Naive thymus-derived CD4-positive, alpha-beta T cell (primary cell): ENCODE measurements at regions of chr12 and their contacts with region 1.

Region 1: GRCh38 chr12:89709157-89709994 is 738 bp upstream of the ATP2B1 start:
- DNase-seq: peak; percentile 94 to 99 (median 97)
- ATAC-seq: peak; percentile 85
- H3K4me3 ChIP-seq: peak overlapping the region; percentile 90
- H3K4me3 Mint-ChIP-seq: peak overlapping the region; percentile 89 to 99 (median 93)
- H3K27ac ChIP-seq: peak overlapping the region; percentile 92
- H3K27ac Mint-ChIP-seq: peak overlapping the region; percentile 85 to 100 (median 95)
- H3K4me1 ChIP-seq: peaks cover 11 to 21% of the 10 kb centered on the region in 2 donors
- H3K4me1 Mint-ChIP-seq: peaks cover 17 to 42% (median 37%) of the 10 kb centered on the region in 7 donors
- H3K27me3 ChIP-seq: no peaks in the 10 kb centered on the region
- H3K27me3 Mint-ChIP-seq: peaks cover 0 to 54% (median 0%) of the 10 kb centered on the region in 5 donors

Region 2: DNA sequence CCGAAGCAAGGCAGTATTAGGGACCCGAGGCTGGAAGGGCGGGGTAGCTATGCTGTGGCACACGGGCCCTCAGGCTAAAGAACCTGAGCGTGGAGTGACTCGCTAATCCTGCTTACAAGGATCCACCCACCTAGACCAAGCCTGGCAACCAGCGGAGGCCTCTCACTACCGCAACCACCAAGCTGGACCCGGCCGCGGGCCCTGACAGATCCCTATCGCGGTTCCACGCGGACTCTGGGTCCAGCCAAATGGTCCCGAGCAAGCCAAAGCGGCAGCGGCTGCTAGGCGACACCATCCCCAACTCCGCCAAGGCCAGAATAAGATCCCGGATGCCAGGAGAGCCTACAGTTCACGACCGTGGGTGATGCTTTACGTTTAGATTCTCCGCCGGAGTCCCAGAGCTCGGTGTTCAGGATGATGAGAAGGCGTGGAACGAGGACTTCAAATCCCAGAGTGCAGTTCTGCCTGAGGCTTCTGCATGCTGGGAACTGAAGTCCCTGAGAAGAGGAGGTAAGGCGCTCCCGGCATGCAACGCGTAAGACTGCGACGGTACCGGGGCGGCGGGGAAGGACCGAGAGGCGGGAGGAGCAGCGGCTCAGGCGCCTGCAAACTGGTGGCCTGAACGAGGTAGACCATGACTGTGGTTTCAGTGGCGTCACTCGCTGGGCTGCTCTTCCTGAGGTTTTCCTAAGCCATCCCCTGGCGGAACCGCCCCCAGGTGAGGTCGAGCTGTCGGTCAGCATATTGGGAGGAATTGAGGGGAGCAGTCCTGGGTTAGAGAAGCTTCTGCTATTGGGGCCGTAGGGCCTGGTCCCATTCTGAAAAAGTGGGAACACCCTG is 1567.4 kb before region 1 on chr12 and contains the starts of genes CEP290 and TMTC3:
- CTCF ChIA-PET with region 1: no interaction called
- POLR2A ChIA-PET with region 1: interaction called, 4 read pairs
- intact Hi-C with region 1: loop called (anchors 1 kb)
- DNase-seq: peak; percentile 69 to 98 (median 94)
- ATAC-seq: peak; percentile 97
- H3K4me3 ChIP-seq: peak within 1 kb of the TSS; percentile 82
- H3K4me3 Mint-ChIP-seq: peak within 1 kb of the TSS; percentile 88 to 100 (median 96)
- H3K27ac ChIP-seq: peak within 1 kb of the TSS; percentile 84
- H3K27ac Mint-ChIP-seq: peak within 1 kb of the TSS; percentile 66 to 99 (median 94)
- H3K4me1 ChIP-seq: peaks cover 12 to 14% of the 10 kb centered on the region in 2 donors
- H3K4me1 Mint-ChIP-seq: peaks cover 26 to 68% (median 45%) of the 10 kb centered on the region in 7 donors
- H3K27me3 ChIP-seq: no peaks in the 10 kb centered on the region
- H3K27me3 Mint-ChIP-seq: no peaks in the 10 kb centered on the region
- total RNA-seq, gene CEP290: 14.7 to 29.5 (median 19.5) TPM
- total RNA-seq, gene TMTC3: 6.4 to 11.1 (median 7.5) TPM

Region 3: DNA sequence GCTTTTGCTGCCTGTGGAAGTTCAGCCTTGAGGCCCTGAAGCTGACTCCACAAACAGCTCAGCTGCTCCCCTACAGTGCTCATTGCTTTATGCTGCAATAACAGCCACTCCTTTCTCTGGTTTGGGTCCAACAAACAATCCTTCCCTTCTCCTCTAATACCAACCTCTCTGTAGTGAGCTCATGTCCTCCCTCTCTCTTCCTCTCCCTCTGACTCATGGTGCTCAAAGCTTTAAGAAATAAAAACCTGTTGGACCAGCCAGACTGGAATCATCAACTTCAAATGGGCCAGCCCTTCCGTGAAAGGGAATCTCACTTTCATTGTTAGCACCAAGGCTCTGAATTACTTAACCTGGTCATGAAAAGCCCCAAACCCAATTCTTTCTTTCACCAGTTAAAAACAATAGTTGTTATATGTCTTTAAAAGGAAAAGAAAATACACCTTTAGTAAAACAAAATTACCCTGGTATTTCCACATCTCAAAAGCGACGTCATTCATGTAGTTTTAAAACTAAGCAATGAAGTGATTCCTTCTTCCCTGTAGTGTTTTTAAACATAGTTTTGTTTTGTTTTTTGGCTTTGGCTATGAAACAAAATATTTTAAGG is 483.5 kb before region 1 on chr12:
- CTCF ChIA-PET with region 1: no interaction called
- POLR2A ChIA-PET with region 1: no interaction called
- intact Hi-C with region 1: loop called in 1 of 2 experiments (anchors 5 kb)
- DNase-seq: peak in 1 of 9 donors; percentile 47
- ATAC-seq: peak; percentile 26
- H3K4me3 ChIP-seq: no peak overlapping the region
- H3K4me3 Mint-ChIP-seq: peak overlapping the region in 8 of 10 donors; percentile 26 to 74 (median 54)
- H3K27ac ChIP-seq: no peak overlapping the region
- H3K27ac Mint-ChIP-seq: peak overlapping the region; percentile 38 to 94 (median 63)
- H3K4me1 ChIP-seq: peaks cover 16 to 17% of the 10 kb centered on the region in 2 donors
- H3K4me1 Mint-ChIP-seq: peaks cover 18 to 76% (median 48%) of the 10 kb centered on the region in 7 donors
- H3K27me3 ChIP-seq: no peaks in the 10 kb centered on the region
- H3K27me3 Mint-ChIP-seq: no peaks in the 10 kb centered on the region

Region 4: GRCh38 chr12:89524541-89525285 is 184.7 kb before region 1 on chr12 and contains the start of gene GALNT4:
- CTCF ChIA-PET with region 1: no interaction called
- POLR2A ChIA-PET with region 1: interaction called, 9 read pairs
- intact Hi-C with region 1: loop called (anchors 1 kb)
- DNase-seq: peak; percentile 61 to 78 (median 74)
- ATAC-seq: peak; percentile 87
- H3K4me3 ChIP-seq: peak within 1 kb of the TSS; percentile 90
- H3K4me3 Mint-ChIP-seq: peak within 1 kb of the TSS; percentile 87 to 98 (median 96)
- H3K27ac ChIP-seq: peak within 1 kb of the TSS; percentile 77
- H3K27ac Mint-ChIP-seq: peak within 1 kb of the TSS; percentile 67 to 96 (median 89)
- H3K4me1 ChIP-seq: peaks cover 30 to 35% of the 10 kb centered on the region in 2 donors
- H3K4me1 Mint-ChIP-seq: peaks cover 30 to 66% (median 55%) of the 10 kb centered on the region in 7 donors
- H3K27me3 ChIP-seq: no peaks in the 10 kb centered on the region
- H3K27me3 Mint-ChIP-seq: no peaks in the 10 kb centered on the region
- total RNA-seq, gene GALNT4: 6.0 to 14.5 (median 9.9) TPM

Region 5: GRCh38 chr12:89663577-89664357 is 45.6 kb before region 1 on chr12:
- CTCF ChIA-PET with region 1: no interaction called
- POLR2A ChIA-PET with region 1: interaction called, 3 read pairs
- intact Hi-C with region 1: loop called in 1 of 2 experiments (anchors 2 kb)
- DNase-seq: peak in 3 of 9 donors; percentile 2 to 15 (median 10)
- ATAC-seq: peak; percentile 62
- H3K4me3 ChIP-seq: no peak overlapping the region
- H3K4me3 Mint-ChIP-seq: peak overlapping the region in 9 of 10 donors; percentile 3 to 48 (median 11)
- H3K27ac ChIP-seq: no peak overlapping the region
- H3K27ac Mint-ChIP-seq: peak overlapping the region in 6 of 9 donors; percentile 21 to 28 (median 27)
- H3K4me1 ChIP-seq: peaks cover 30 to 36% of the 10 kb centered on the region in 2 donors
- H3K4me1 Mint-ChIP-seq: peaks cover 16 to 78% (median 74%) of the 10 kb centered on the region in 7 donors
- H3K27me3 ChIP-seq: no peaks in the 10 kb centered on the region
- H3K27me3 Mint-ChIP-seq: no peaks in the 10 kb centered on the region

Region 6: GRCh38 chr12:89862511-89863179 is 153.3 kb after region 1 on chr12:
- CTCF ChIA-PET with region 1: no interaction called
- POLR2A ChIA-PET with region 1: interaction called, 26 read pairs
- intact Hi-C with region 1: loop called (anchors 1 kb)
- DNase-seq: peak in 7 of 9 donors; percentile 46 to 66 (median 57)
- ATAC-seq: peak; percentile 49
- H3K4me3 ChIP-seq: peak overlapping the region; percentile 44
- H3K4me3 Mint-ChIP-seq: peak overlapping the region; percentile 78 to 86 (median 82)
- H3K27ac ChIP-seq: peak overlapping the region; percentile 87
- H3K27ac Mint-ChIP-seq: peak overlapping the region; percentile 96 to 99 (median 98)
- H3K4me1 ChIP-seq: peaks cover 23 to 30% of the 10 kb centered on the region in 2 donors
- H3K4me1 Mint-ChIP-seq: peaks cover 40 to 72% (median 53%) of the 10 kb centered on the region in 7 donors
- H3K27me3 ChIP-seq: no peaks in the 10 kb centered on the region
- H3K27me3 Mint-ChIP-seq: no peaks in the 10 kb centered on the region

Region 7: DNA sequence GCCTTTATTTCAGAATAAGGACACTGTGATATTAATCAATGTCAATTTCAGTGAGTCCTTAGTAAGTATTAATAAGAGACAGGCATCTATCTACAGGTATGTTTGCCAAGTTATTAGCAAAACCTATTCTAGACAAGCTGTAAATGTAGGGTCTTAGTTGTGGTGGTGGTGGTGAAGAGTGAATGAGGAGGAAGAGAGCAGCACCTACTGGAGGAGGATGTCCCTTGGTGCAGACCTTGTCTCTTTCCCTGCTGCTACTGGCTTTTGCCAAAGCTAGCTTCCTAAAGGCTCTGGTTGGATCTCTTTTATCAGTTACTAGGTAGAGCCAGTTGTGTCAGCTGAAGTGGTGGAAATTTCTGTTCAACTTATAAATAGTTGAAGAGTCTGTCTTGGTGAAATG is 304.0 kb after region 1 on chr12:
- CTCF ChIA-PET with region 1: no interaction called
- POLR2A ChIA-PET with region 1: no interaction called
- intact Hi-C with region 1: loop called in 1 of 2 experiments (anchors 5 kb)
- DNase-seq: peak in 2 of 9 donors; percentile 8 to 16
- ATAC-seq: peak; percentile 60
- H3K4me3 ChIP-seq: no peak overlapping the region
- H3K4me3 Mint-ChIP-seq: no peak overlapping the region
- H3K27ac ChIP-seq: no peak overlapping the region
- H3K27ac Mint-ChIP-seq: no peak overlapping the region
- H3K4me1 ChIP-seq: no peaks in the 10 kb centered on the region
- H3K4me1 Mint-ChIP-seq: peaks cover 0 to 2% (median 0%) of the 10 kb centered on the region in 7 donors
- H3K27me3 ChIP-seq: no peaks in the 10 kb centered on the region
- H3K27me3 Mint-ChIP-seq: peaks cover 0 to 3% (median 0%) of the 10 kb centered on the region in 5 donors